H1 (cell line): ENCODE measurements at regions of chr17 and their contacts with region 1.

Region 1: GRCh38 chr17:1716076-1716995 is 6.2 kb upstream of the TLCD2 start:
- DNase-seq: peak; percentile 99 to 100
- H3K4me3 ChIP-seq: peak overlapping the region; percentile 74 to 94 (median 82)
- H3K27ac ChIP-seq: peak overlapping the region; percentile 94
- H3K4me1 ChIP-seq: peaks cover 0 to 16% (median 12%) of the 10 kb centered on the region in 4 experiments; a peak in 6 of 7 replicates
- H3K27me3 ChIP-seq: no peaks in the 10 kb centered on the region
- CTCF ChIP-seq: no peak; a peak in 1 of 4 replicates
- EP300 ChIP-seq: no peak
- POLR2A ChIP-seq: peak; percentile 32 to 70
- RAD21 ChIP-seq: no peak

Region 2: GRCh38 chr17:1673041-1673785 is 43.1 kb before region 1 on chr17:
- CTCF ChIA-PET with region 1: interaction called, 10 read pairs
- POLR2A ChIA-PET with region 1: interaction called, 3 read pairs
- DNase-seq: no peak
- H3K4me3 ChIP-seq: no peak overlapping the region
- H3K27ac ChIP-seq: no peak overlapping the region
- H3K4me1 ChIP-seq: no peaks in the 10 kb centered on the region
- H3K27me3 ChIP-seq: no peaks in the 10 kb centered on the region
- CTCF ChIP-seq: no peak
- EP300 ChIP-seq: no peak
- POLR2A ChIP-seq: peak in 1 of 2 experiments; percentile 24; a peak in 1 of 3 replicates
- RAD21 ChIP-seq: no peak

Region 3: DNA sequence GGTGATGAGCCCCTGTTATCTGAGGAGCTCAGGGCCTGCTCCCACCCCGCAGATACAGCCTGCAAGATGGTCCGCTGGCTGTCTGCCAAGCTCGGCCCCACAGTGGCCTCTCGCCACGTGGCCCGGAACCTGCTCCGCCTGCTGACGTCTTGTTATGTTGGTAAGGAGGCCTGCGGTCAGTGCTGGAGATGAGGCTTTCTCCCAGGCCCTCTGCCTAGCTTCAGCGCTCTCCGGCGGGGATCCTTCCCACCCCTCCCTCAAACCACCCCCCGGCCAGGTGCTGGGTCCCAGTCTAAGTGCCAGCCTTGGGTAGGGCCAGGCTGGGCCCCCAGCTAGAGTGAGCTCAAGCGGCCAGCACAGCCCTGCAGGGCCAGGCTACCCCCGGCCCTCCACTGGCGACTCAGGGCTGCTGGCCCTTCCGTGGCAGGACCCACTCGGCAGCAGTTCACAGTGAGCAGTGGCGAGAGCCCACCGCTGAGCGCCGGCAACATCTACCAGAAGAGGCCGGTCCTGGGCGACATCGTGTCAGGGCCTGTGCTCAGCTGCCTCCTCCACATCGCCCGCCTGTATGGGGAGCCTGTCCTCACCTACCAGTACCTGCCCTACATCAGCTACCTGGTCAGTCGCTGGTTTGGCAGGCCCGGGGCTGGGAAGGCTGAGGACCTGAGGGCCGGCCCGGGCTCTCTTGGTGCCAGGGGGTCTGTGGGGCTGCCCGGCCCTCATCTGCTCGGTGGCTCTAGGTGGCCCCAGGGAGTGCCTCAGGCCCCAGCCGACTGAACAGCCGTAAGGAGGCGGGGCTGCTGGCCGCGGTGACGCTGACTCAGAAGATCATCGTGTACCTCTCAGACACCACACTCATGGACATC is 14.2 kb after region 1 on chr17:
- CTCF ChIA-PET with region 1: interaction called, 34 read pairs
- POLR2A ChIA-PET with region 1: interaction called, 17 read pairs
- DNase-seq: no peak
- H3K4me3 ChIP-seq: no peak overlapping the region
- H3K27ac ChIP-seq: no peak overlapping the region
- H3K4me1 ChIP-seq: no peaks in the 10 kb centered on the region
- H3K27me3 ChIP-seq: no peaks in the 10 kb centered on the region
- CTCF ChIP-seq: no peak
- EP300 ChIP-seq: no peak
- POLR2A ChIP-seq: no peak
- RAD21 ChIP-seq: no peak

Region 4: DNA sequence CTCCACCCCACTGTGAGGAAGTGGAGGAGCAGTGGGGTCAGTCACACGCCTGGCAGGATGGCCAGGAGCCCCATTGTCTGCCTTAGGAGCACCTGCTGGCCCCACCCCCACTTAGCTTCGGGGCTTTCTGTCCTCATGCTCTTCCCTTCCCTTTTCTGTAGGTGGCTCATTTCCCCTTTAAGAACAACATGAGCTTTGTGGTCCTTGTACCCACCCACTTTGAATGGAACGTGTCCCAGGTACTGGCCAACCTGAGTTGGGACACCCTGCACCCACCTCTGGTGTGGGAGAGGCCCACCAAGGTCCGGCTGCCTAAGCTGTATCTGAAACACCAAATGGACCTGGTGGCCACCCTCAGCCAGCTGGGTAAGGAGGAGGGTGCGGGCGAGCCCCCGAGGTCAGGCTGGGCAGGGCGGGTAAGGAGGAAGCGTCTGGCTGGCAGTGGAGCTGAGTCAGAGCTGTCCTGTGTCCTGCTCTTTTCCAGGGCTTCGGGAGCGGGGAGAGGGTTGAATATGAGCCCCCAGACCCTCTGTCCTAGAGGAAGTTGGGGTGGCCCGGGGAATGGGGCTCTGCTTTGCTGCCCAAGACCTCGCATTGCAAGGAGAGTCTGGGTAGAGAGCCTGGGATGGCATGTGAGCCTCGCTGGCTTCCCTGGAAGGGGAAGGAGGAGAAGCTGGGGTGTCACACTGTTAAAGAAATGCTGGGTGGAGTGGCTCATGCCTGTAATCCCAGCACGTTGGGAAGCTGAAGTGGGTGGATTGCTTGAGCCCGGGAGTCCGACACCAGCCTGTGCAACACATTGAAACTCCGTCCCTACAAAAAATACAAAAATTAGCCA is 36.3 kb after region 1 on chr17:
- CTCF ChIA-PET with region 1: interaction called, 48 read pairs
- POLR2A ChIA-PET with region 1: interaction called, 30 read pairs
- DNase-seq: no peak
- H3K4me3 ChIP-seq: peak overlapping the region in 1 of 4 experiments; percentile 33; a peak in 1 of 8 replicates
- H3K27ac ChIP-seq: no peak overlapping the region
- H3K4me1 ChIP-seq: peaks cover 0 to 16% (median 11%) of the 10 kb centered on the region in 4 experiments; a peak in 6 of 7 replicates
- H3K27me3 ChIP-seq: no peaks in the 10 kb centered on the region
- CTCF ChIP-seq: no peak
- EP300 ChIP-seq: no peak
- POLR2A ChIP-seq: no peak
- RAD21 ChIP-seq: no peak

Region 5: DNA sequence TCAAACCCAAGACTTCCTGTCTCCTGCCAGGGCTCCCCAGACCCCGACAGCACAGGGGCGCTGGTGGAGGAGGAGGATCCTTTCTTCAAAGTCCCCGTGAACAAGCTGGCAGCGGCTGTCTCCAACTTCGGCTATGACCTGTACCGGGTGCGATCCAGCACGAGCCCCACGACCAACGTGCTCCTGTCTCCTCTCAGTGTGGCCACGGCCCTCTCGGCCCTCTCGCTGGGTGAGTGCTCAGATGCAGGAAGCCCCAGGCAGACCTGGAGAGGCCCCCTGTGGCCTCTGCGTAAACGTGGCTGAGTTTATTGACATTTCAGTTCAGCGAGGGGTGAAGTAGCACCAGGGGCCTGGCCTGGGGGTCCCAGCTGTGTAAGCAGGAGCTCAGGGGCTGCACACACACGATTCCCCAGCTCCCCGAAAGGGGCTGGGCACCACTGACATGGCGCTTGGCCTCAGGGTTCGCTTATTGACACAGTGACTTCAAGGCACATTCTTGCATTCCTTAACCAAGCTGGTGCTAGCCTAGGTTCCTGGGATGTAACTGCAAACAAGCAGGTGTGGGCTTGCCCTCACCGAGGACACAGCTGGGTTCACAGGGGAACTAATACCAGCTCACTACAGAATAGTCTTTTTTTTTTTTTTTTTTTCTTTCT is 53.6 kb after region 1 on chr17:
- CTCF ChIA-PET with region 1: interaction called, 42 read pairs
- POLR2A ChIA-PET with region 1: interaction called, 14 read pairs
- DNase-seq: no peak
- H3K4me3 ChIP-seq: no peak overlapping the region
- H3K27ac ChIP-seq: no peak overlapping the region
- H3K4me1 ChIP-seq: peaks cover 0 to 10% (median 6%) of the 10 kb centered on the region in 4 experiments; a peak in 5 of 7 replicates
- H3K27me3 ChIP-seq: no peaks in the 10 kb centered on the region
- CTCF ChIP-seq: no peak
- EP300 ChIP-seq: no peak
- POLR2A ChIP-seq: 0 out of 3 replicates have a peak, but pooled peaks of 1 of the 2 experiments have one; percentile 26
- RAD21 ChIP-seq: no peak